AG04450 (cell line): ENCODE measurements at regions of chr1 and their contacts with region 1.

Region 1: DNA sequence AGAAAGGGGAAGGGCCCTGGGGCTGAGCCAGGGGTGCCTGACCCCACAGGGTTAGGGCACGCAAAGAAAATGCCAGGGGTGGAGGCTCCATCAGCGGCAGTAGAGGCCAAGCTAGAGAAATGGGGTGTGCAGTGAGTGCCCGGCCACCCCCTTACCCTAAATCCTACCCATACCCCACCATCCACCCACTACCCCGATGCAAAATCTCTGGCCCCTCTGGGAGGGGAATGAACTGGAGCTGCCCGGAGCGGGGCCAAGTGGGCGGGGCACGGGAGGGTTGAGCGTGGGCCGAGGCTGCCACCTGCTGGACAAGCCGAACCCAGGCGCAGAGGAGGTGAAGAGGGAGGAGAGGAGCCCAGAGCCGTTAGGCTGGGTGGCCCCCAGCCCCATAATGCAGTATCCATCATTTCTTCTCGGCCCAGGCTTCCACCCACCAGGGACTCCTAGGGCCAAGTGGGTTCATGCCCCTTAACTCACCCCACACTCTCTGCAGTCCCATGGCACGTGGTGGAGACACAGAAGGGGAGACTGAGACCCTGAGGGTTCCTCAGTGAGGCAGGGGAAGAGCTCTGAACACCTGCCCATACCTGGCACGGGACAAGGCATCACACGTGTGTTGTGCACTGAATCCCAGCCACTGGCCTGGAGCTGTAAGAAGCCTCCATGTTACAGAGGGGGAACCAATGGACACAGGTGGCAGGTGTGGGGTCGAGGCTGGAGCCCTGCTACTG is 1.4 kb upstream of the C1QC start:
- DNase-seq: no peak
- H3K4me3 ChIP-seq: no peak overlapping the region
- H3K27ac ChIP-seq: no peak overlapping the region
- H3K27me3 ChIP-seq: peaks cover 30% of the 10 kb centered on the region
- CTCF ChIP-seq: peak; percentile 94

Region 2: DNA sequence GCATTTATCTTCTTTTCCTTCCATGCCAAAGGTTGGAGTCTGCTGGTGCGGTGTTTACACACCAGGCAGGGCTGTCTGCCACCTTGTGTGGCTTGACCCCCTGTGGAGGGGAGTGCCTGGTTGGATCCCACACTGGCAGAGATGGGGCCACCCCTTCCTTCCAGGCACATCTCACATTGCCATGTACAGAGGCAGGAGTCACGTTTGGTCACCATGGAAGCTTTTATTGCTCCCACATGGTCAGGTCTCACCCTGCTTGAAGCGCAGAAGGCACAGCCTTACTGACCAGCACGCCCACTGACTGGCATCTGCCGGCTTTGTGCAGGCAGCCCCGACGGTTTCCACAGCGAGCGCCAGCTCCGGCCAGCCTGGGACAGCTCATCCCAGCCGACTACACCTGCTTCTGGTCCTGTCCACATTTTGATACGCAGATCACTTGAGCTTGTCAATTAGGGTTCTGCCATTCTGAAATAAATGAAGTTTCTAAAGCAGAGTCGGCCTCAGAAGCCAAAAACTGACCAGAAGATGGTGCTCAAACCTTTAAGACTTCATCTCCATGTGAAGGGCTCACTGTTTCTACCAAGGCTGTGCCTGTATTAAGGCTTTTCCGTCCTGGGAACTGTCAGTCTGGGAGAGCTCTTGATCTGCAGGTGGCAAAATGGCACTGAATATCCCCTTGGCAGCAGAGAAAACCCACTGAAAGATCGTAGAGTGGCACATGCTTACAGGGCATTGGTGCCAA is 114.3 kb before region 1 on chr1:
- CTCF ChIA-PET with region 1: interaction called, 12 read pairs
- POLR2A ChIA-PET with region 1: no interaction called
- DNase-seq: no peak
- H3K4me3 ChIP-seq: no peak overlapping the region
- H3K27ac ChIP-seq: no peak overlapping the region
- H3K27me3 ChIP-seq: no peaks in the 10 kb centered on the region
- CTCF ChIP-seq: peak; percentile 14; the same call in 1 of the 2 replicates